ENCODE measurements at regions of chr13 and their contacts with region 1.

Region 1: DNA sequence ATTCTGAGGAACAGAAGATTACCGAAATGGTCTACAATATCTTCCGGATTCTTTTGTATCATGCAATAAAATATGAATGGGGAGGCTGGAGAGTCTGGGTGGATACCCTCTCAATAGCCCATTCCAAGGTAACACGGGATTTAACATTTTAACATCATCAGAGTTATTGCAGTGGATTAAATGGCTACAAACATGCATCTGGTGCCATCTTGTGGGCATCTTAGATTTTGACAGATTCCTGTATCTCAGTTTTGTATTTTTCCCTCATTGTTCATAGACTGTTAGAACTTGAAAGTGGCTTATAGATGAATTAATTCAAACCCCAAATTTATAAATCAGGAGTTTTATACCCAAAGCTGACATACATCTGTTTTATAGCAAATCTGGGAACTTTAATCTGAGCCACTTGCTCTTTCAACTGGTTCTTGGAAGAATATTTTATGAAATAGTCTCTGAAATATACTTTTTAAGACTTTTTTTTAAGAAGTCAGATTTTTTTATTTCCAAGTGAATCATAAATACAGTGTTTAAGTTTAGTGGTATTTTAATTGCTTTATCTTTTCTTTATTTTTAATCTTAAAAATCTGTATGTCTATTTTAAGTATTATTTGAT is 215.2 kb downstream of the NBEA start:
- DNase-seq: peak in 1 of 2 donors; percentile 6
- ATAC-seq: peak; percentile 73

Region 2: GRCh38 chr13:33931397-33932311 is 1225.6 kb before region 1 on chr13:
- intact Hi-C with region 1: loop called in 1 of 2 experiments (anchors 10 kb)
- DNase-seq: no peak
- ATAC-seq: peak; percentile 74

Region 3: DNA sequence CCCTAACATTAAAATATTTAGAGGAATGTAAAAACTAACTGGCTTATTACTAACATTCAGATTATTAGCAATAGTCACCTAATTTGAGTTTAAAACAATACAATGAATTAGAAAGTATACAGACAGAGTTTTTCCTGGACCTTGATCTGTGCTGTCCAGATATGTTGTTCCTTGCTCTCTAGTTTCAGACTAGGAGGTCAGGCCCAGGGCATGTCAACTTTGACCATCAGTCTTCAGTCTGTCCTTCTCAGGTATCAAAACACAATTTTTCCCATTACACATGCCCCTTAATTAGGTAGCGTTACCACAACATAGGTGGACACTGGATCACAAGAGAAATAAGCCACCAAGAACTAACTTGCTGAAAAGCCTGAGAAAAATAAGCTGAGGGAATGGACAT is 122.3 kb after region 1 on chr13:
- intact Hi-C with region 1: no loop called
- DNase-seq: no peak
- ATAC-seq: no peak

Measured in left colon (tissue), 2 donors.